ENCODE measurements at regions of chr7 and their contacts with region 1.

Region 1: GRCh38 chr7:131556052-131556908 is at the start of gene PODXL:
- DNase-seq: peak; percentile 73 to 83
- H3K4me3 ChIP-seq: peak within 1 kb of the TSS; percentile 91
- H3K4me3 Mint-ChIP-seq: peak within 1 kb of the TSS; percentile 94
- H3K27ac Mint-ChIP-seq: peak within 1 kb of the TSS; percentile 67
- H3K4me1 ChIP-seq: peaks cover 31% of the 10 kb centered on the region
- H3K4me1 Mint-ChIP-seq: peaks cover 34% of the 10 kb centered on the region
- H3K27me3 ChIP-seq: no peaks in the 10 kb centered on the region
- H3K27me3 Mint-ChIP-seq: no peaks in the 10 kb centered on the region
- CTCF ChIP-seq: no peak
- total RNA-seq, gene PODXL: 243 and 278 TPM in 2 replicates

Region 2: GRCh38 chr7:131604841-131605279 is 48.6 kb after region 1 on chr7:
- CTCF ChIA-PET with region 1: no interaction called
- POLR2A ChIA-PET with region 1: no interaction called
- intact Hi-C with region 1: loop called (anchors 5 kb)
- DNase-seq: no peak
- H3K4me3 ChIP-seq: no peak overlapping the region
- H3K4me3 Mint-ChIP-seq: no peak overlapping the region
- H3K27ac Mint-ChIP-seq: peak overlapping the region; percentile 81
- H3K4me1 ChIP-seq: peaks cover 97% of the 10 kb centered on the region
- H3K4me1 Mint-ChIP-seq: peaks cover 68% of the 10 kb centered on the region
- H3K27me3 ChIP-seq: no peaks in the 10 kb centered on the region
- H3K27me3 Mint-ChIP-seq: no peaks in the 10 kb centered on the region
- CTCF ChIP-seq: no peak